Upper lobe of right lung (tissue), 1 donor: ENCODE measurements at regions of chr17 and their contacts with region 1.

Region 1: DNA sequence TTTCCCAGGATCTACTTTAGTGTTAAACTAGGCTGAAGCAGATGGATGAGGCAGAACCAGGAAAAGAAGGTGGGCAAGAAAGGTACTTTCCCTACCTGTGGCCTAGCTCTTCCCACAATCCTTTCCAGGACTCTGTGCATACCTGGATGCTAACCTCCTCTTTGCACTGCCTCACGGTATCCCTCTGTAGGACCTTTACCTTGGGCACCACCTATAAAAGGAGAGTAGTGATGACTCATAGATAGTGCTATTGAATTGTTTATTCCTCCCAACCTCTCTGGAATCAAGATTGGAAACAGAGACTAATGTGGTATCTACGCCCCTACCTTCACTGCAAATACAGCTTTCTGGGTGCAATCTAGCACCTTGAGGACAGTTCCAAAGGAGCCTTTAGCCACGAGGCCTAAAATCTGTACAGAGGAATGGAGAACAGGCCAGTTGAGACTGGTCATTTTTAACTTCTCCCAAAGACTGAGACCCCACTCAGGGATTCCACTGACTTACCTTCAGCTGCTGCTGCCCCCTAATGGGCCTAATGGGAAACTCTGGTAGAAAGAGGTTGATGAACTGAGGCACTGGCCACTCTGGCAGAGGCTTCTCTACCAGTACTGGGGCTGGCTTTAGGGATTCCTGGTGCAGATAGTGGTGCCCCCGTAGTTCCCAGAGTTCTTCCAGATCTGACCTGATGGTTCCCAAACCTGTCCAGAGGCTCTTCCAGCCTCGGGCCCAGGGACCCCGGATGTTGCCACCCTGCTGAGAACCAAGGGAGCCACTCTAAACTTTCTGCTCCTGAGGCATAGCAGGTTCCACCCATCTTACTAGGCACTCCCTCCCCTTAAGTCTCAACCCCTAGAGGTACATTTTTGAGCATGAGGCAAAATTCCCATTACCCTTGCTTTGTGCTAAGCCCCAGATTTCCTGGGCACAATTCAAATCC is 781 bp downstream of the RSKR start:
- DNase-seq: no peak
- ATAC-seq: peak; percentile 68
- H3K4me3 ChIP-seq: no peak overlapping the region
- H3K27ac ChIP-seq: no peak overlapping the region
- H3K4me1 ChIP-seq: no peaks in the 10 kb centered on the region
- H3K27me3 ChIP-seq: no peaks in the 10 kb centered on the region
- CTCF ChIP-seq: peak; percentile 64

Region 2: DNA sequence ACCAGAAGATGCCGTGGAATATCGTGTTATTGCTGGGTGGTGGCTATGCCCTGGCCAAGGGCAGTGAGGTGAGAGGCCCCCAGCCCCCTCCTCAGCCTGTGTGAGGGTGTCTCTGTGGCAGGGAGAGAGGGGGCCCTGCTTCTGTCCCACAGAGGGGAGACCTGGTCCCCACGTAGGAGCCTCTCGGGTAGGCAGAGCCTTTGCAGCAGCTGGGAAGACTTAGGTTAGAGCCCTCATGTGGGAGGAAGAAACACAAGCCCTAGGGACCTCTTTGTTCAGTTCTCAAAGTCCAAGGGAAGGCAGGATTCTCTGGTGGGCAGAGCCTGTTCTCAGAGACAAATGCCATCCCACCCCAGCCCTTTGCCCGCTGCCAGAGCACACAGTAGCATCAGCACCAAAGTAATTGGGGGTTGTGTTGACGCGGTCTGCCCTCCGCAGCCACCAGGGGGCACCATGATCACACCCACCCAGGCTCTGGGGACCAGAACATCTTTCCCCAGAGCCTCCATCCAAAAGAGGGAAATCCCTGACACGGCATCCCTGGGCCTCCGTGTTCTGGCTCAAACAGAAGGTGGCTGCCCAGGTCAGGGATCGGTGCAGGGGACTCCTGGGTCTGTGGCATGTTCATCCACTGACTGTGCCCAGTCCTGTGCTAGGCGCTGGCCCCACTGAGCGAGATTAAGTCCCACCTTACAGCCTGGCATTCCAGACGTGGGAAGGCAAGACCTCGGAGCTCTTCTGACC is 118.6 kb before region 1 on chr17:
- intact Hi-C with region 1: loop called (anchors 5 kb)
- DNase-seq: peak; percentile 87
- ATAC-seq: peak; percentile 88
- H3K4me3 ChIP-seq: no peak overlapping the region
- H3K27ac ChIP-seq: no peak overlapping the region
- H3K4me1 ChIP-seq: no peaks in the 10 kb centered on the region
- H3K27me3 ChIP-seq: no peaks in the 10 kb centered on the region
- CTCF ChIP-seq: peak; percentile 91

Region 3: GRCh38 chr17:28717578-28718333 is 104.6 kb after region 1 on chr17 and contains the start of gene RAB34:
- intact Hi-C with region 1: no loop called
- DNase-seq: peak; percentile 92
- ATAC-seq: peak; percentile 66
- H3K4me3 ChIP-seq: peak within 1 kb of the TSS; percentile 86
- H3K27ac ChIP-seq: peak within 1 kb of the TSS; percentile 86
- H3K4me1 ChIP-seq: peaks cover 44% of the 10 kb centered on the region
- H3K27me3 ChIP-seq: no peaks in the 10 kb centered on the region
- CTCF ChIP-seq: peak; percentile 38
- total RNA-seq, gene RAB34: 63.5 TPM